HepG2 (cell line): ENCODE measurements at regions of chr19 and their contacts with region 1.

Region 1: DNA sequence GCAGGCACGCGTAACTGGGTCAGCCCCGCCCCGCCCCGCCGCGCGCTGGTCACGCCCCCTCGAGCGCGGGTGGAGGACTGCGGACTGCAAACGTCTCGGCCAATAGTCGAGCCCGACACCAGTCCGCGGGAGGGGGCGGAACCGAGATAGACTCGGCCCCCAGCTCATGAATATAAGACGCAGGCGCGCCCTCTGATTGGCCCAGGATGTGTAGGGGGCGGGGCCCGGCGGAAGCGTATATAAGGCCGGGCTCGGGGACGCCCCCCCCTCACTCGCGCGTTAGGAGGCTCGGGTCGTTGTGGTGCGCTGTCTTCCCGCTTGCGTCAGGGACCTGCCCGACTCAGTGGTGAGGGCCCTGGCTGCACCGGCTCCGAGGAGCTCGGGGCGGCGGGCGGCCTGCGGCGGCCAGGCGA is at the start of gene CIRBP:
- DNase-seq: peak; percentile 96
- ATAC-seq: peak; percentile 45
- H3K4me3 ChIP-seq: peak within 1 kb of the TSS; percentile 59 to 83 (median 62)
- H3K27ac ChIP-seq: peak within 1 kb of the TSS; percentile 85
- H3K4me1 ChIP-seq: peaks cover 78% of the 10 kb centered on the region
- H3K27me3 ChIP-seq: no peaks in the 10 kb centered on the region
- CTCF ChIP-seq: no peak
- EP300 ChIP-seq: no peak
- POLR2A ChIP-seq: peak in 1 of 2 experiments; percentile 96; a peak in 2 of 4 replicates
- RAD21 ChIP-seq: no peak
- total RNA-seq, gene CIRBP: 133 and 135 TPM in 2 replicates

Region 2: GRCh38 chr19:1094975-1095701 is 173.9 kb before region 1 on chr19 and contains the start of gene POLR2E:
- CTCF ChIA-PET with region 1: no interaction called
- POLR2A ChIA-PET with region 1: interaction called, 13 read pairs
- in situ Hi-C with region 1: no loop called
- intact Hi-C with region 1: no loop called
- DNase-seq: peak; percentile 94
- ATAC-seq: peak; percentile 73
- H3K4me3 ChIP-seq: peak within 1 kb of the TSS; percentile 91 to 99 (median 97)
- H3K27ac ChIP-seq: peak within 1 kb of the TSS; percentile 57
- H3K4me1 ChIP-seq: peaks cover 55% of the 10 kb centered on the region
- H3K27me3 ChIP-seq: no peaks in the 10 kb centered on the region; a peak in 1 of 5 replicates
- CTCF ChIP-seq: no peak
- EP300 ChIP-seq: peak in 1 of 2 experiments; percentile 48; a peak in 1 of 4 replicates
- POLR2A ChIP-seq: peak; percentile 62 to 74
- RAD21 ChIP-seq: no peak; the same call in 1 of the 2 replicates
- total RNA-seq, gene POLR2E: 140 TPM in 2 replicates

Region 3: DNA sequence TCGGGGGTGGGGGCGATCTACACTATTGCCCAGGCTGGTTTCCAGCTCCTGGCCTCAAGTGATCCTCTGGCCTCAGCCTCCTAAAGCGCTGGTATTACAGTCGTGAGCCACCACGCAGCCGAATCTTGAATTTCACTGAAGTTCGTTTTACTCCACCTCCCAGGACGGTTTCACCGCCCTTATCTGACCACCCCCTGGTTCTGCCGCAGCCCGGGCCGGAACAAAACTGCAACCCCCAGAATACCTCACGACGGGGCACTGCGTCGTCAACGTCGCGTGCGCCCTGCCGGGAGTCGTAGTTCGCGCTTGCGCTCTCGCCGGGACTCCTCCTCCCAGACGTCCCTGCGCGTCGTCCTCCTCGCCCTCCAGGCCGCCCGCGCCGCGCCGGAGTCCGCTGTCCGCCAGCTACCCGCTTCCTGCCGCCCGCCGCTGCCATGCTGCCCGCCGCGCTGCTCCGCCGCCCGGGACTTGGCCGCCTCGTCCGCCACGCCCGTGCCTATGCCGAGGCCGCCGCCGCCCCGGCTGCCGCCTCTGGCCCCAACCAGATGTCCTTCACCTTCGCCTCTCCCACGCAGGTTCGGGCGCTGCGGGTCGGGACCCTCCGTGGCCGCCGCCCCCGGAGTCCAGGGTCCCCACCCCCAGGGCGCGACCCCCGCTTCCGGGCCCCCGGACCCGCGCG is 27.5 kb before region 1 on chr19 and contains the start of gene ATP5F1D:
- CTCF ChIA-PET with region 1: interaction called, 60 read pairs
- POLR2A ChIA-PET with region 1: interaction called, 469 read pairs
- in situ Hi-C with region 1: no loop called
- intact Hi-C with region 1: loop called (anchors 1 kb)
- DNase-seq: peak; percentile 88
- ATAC-seq: peak; percentile 26
- H3K4me3 ChIP-seq: peak within 1 kb of the TSS; percentile 80 to 93 (median 90)
- H3K27ac ChIP-seq: peak within 1 kb of the TSS; percentile 96
- H3K4me1 ChIP-seq: peaks cover 67% of the 10 kb centered on the region
- H3K27me3 ChIP-seq: no peaks in the 10 kb centered on the region
- CTCF ChIP-seq: peak; percentile 33; the same call in 1 of the 2 replicates
- EP300 ChIP-seq: no peak
- POLR2A ChIP-seq: peak in 1 of 2 experiments; percentile 46; a peak in 1 of 4 replicates
- RAD21 ChIP-seq: no peak; the same call in 1 of the 2 replicates
- total RNA-seq, gene ATP5F1D: 78.7 and 88.0 TPM in 2 replicates

Region 4: DNA sequence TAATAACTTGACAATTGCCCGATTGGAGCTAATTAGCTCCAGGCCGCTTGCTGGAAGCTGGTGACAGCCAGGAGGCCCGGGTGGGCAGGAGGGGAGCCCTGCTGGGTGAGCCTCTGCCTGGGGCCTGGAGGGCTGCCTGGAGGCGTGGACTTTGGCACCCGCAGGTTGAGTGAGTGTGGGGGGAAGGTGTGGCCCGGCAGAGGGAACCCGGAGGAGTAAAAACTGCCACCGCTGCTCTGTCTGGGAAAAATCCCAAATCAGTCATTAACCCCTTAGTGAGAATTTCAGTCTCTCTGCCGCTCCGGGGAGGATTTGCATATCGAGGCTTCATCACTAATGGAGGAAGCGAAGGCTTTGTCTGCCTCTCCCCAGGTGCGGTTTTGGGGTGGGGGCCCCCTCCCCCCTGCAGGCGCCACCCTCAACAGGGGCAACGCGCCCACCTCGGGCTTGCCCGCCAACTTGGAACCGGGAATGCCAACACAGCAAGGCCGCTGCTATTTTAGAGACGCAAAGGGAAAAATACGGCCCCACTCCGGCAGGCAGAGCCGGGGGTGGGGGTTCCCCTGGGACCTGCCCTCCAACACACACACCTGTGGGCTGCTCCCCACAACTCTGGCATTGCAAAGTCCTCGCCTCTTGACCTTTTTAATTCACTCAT is 22.8 kb after region 1 on chr19:
- CTCF ChIA-PET with region 1: no interaction called
- POLR2A ChIA-PET with region 1: interaction called, 13 read pairs
- in situ Hi-C with region 1: no loop called
- intact Hi-C with region 1: no loop called
- DNase-seq: no peak
- ATAC-seq: peak; percentile 53
- H3K4me3 ChIP-seq: peak overlapping the region; percentile 25 to 75 (median 63); a peak in 3 of 6 replicates
- H3K27ac ChIP-seq: peak overlapping the region; percentile 91
- H3K4me1 ChIP-seq: peaks cover 61% of the 10 kb centered on the region
- H3K27me3 ChIP-seq: no peaks in the 10 kb centered on the region
- CTCF ChIP-seq: no peak
- EP300 ChIP-seq: peak in 1 of 2 experiments; percentile 14; a peak in 1 of 4 replicates
- POLR2A ChIP-seq: no peak
- RAD21 ChIP-seq: 0 out of 2 replicates have a peak, but pooled peaks have one; percentile 18

Region 5: GRCh38 chr19:1343041-1343440 is 74.0 kb after region 1 on chr19:
- CTCF ChIA-PET with region 1: no interaction called
- POLR2A ChIA-PET with region 1: interaction called, 12 read pairs
- in situ Hi-C with region 1: no loop called
- intact Hi-C with region 1: no loop called
- DNase-seq: no peak
- ATAC-seq: no peak
- H3K4me3 ChIP-seq: no peak overlapping the region
- H3K27ac ChIP-seq: no peak overlapping the region
- H3K4me1 ChIP-seq: peaks cover 19% of the 10 kb centered on the region; the same call in 1 of the 2 replicates
- H3K27me3 ChIP-seq: peaks cover 3 to 4% of the 10 kb centered on the region in 2 experiments; a peak in 2 of 5 replicates
- CTCF ChIP-seq: no peak
- EP300 ChIP-seq: no peak
- POLR2A ChIP-seq: no peak
- RAD21 ChIP-seq: no peak

Region 6: DNA sequence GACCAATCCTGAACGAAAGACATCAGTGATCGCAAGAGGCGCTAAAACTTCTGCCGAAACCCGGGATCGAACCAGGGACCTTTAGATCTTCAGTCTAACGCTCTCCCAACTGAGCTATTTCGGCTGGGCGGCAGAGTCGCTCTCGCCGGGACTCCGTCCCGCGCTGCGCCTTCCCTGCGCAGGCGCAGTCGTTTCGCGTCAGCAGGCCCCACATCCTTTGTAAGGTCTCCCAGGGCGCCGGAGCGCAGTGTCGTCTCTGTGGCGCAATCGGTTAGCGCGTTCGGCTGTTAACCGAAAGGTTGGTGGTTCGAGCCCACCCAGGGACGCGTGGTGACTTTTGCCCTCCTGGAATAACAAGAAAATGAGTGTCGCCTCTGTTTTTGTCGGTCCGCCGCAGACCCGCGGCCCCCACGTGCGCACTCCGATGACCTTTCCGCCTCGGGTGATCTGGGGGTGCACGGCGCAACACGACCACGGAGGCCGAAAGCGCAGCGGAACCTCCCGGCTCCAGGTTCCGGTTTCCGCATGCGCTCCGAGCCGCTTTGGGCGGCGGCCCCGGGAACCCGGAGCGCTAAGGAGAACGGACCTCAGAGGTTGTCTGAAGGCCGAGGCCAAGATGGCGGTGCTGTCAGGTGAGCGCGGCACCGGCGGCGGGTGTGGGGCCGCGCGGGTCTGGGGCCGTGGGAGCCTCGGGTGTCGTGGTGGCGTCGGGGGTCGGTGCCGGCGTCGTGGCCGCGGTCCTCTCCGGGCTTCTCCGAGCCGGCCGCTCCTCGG is 114.4 kb after region 1 on chr19 and contains the start of gene NDUFS7:
- CTCF ChIA-PET with region 1: no interaction called
- POLR2A ChIA-PET with region 1: interaction called, 16 read pairs
- in situ Hi-C with region 1: no loop called
- intact Hi-C with region 1: no loop called
- DNase-seq: peak; percentile 76
- ATAC-seq: peak; percentile 69
- H3K4me3 ChIP-seq: peak within 1 kb of the TSS; percentile 73 to 95 (median 94)
- H3K27ac ChIP-seq: peak within 1 kb of the TSS; percentile 73
- H3K4me1 ChIP-seq: peaks cover 37% of the 10 kb centered on the region
- H3K27me3 ChIP-seq: no peaks in the 10 kb centered on the region; a peak in 1 of 5 replicates
- CTCF ChIP-seq: peak; percentile 48
- EP300 ChIP-seq: peak; percentile 57 to 87; a peak in 3 of 4 replicates
- POLR2A ChIP-seq: peak; percentile 62 to 63; a peak in 3 of 4 replicates
- RAD21 ChIP-seq: peak; percentile 76
- total RNA-seq, gene NDUFS7: 41.9 and 66.9 TPM in 2 replicates

Region 7: GRCh38 chr19:1425102-1425837 is 156.2 kb after region 1 on chr19:
- CTCF ChIA-PET with region 1: no interaction called
- POLR2A ChIA-PET with region 1: interaction called, 15 read pairs
- in situ Hi-C with region 1: no loop called
- intact Hi-C with region 1: no loop called
- DNase-seq: no peak
- ATAC-seq: no peak
- H3K4me3 ChIP-seq: no peak overlapping the region
- H3K27ac ChIP-seq: peak overlapping the region; percentile 80
- H3K4me1 ChIP-seq: peaks cover 41% of the 10 kb centered on the region
- H3K27me3 ChIP-seq: no peaks in the 10 kb centered on the region
- CTCF ChIP-seq: no peak
- EP300 ChIP-seq: no peak
- POLR2A ChIP-seq: peak in 1 of 2 experiments; percentile 33; a peak in 1 of 4 replicates
- RAD21 ChIP-seq: no peak